ENCODE measurements at regions of chr2 and their contacts with region 1.

Region 1: GRCh38 chr2:22904126-22904684 is 480.8 kb upstream of the KLHL29 start:
- DNase-seq: peak in 1 of 2 donors; percentile 77
- ATAC-seq: peak; percentile 52
- H3K4me3 ChIP-seq: no peak overlapping the region
- H3K27ac ChIP-seq: no peak overlapping the region
- H3K4me1 ChIP-seq: no peaks in the 10 kb centered on the region
- H3K27me3 ChIP-seq: peaks cover 0 to 2% of the 10 kb centered on the region in 2 donors

Region 2: GRCh38 chr2:22481486-22482259 is 422.5 kb before region 1 on chr2:
- intact Hi-C with region 1: no loop called
- DNase-seq: peak in 1 of 2 donors; percentile 48
- ATAC-seq: peak; percentile 77
- H3K4me3 ChIP-seq: no peak overlapping the region
- H3K27ac ChIP-seq: no peak overlapping the region
- H3K4me1 ChIP-seq: no peaks in the 10 kb centered on the region
- H3K27me3 ChIP-seq: no peaks in the 10 kb centered on the region

Region 3: GRCh38 chr2:23351388-23352141 is 447.4 kb after region 1 on chr2:
- intact Hi-C with region 1: loop called in 1 of 2 experiments (anchors 5 kb)
- DNase-seq: peak; percentile 91 to 96
- ATAC-seq: peak; percentile 90
- H3K4me3 ChIP-seq: no peak overlapping the region
- H3K27ac ChIP-seq: no peak overlapping the region
- H3K4me1 ChIP-seq: no peaks in the 10 kb centered on the region
- H3K27me3 ChIP-seq: no peaks in the 10 kb centered on the region